ENCODE measurements at regions of chr3 and their contacts with region 1.

Region 1: GRCh38 chr3:4712143-4712542 is 219.0 kb downstream of the ITPR1 start:
- DNase-seq: no peak
- H3K4me3 ChIP-seq: no peak overlapping the region
- H3K27ac ChIP-seq: peak overlapping the region; percentile 27
- H3K4me1 ChIP-seq: peaks cover 13% of the 10 kb centered on the region
- H3K27me3 ChIP-seq: no peaks in the 10 kb centered on the region
- CTCF ChIP-seq: no peak
- POLR2A ChIP-seq: no peak

Region 2: DNA sequence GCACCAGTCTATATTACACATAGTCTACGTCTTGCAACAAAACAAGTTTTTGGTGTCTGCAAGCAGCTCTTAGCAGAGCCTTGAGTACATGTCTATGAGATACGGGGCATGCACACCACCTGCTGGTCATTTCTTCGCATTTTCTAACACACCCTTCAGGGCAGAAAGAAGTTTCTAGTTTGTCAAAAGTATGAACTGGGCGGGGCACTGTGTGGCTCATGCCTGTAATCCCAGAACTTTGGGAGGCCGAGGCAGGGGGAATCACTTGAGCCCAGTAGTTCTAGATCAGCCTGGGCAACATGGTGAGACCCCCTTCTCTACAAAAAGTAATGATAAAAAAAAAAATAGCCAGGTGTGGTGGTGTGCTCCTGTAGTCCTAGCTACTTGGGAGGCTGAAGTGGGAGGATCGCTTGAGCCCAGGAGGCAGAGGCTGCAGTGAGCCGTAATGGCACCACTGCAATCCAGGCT is 345.7 kb after region 1 on chr3:
- intact Hi-C with region 1: loop called (anchors 5 kb)
- DNase-seq: peak in 1 of 2 donors; percentile 92
- H3K4me3 ChIP-seq: no peak overlapping the region
- H3K27ac ChIP-seq: peak overlapping the region; percentile 78
- H3K4me1 ChIP-seq: peaks cover 34% of the 10 kb centered on the region
- H3K27me3 ChIP-seq: no peaks in the 10 kb centered on the region
- CTCF ChIP-seq: peak; percentile 61 to 81 (median 71)
- POLR2A ChIP-seq: no peak

Measured in vagina (tissue), 2 donors.